ENCODE measurements at regions of chr20 and their contacts with region 1.

Region 1: GRCh38 chr20:43590392-43591323 is at the start of gene IFT52:
- DNase-seq: peak; percentile 96
- ATAC-seq: peak; percentile 99
- total RNA-seq, gene IFT52: 6.5 TPM

Region 2: GRCh38 chr20:43375591-43375990 is 215.1 kb before region 1 on chr20:
- intact Hi-C with region 1: no loop called
- DNase-seq: no peak
- ATAC-seq: no peak

Region 3: GRCh38 chr20:43456809-43457639 is 133.6 kb before region 1 on chr20:
- intact Hi-C with region 1: loop called (anchors 5 kb)
- DNase-seq: peak; percentile 94
- ATAC-seq: peak; percentile 89

Region 4: DNA sequence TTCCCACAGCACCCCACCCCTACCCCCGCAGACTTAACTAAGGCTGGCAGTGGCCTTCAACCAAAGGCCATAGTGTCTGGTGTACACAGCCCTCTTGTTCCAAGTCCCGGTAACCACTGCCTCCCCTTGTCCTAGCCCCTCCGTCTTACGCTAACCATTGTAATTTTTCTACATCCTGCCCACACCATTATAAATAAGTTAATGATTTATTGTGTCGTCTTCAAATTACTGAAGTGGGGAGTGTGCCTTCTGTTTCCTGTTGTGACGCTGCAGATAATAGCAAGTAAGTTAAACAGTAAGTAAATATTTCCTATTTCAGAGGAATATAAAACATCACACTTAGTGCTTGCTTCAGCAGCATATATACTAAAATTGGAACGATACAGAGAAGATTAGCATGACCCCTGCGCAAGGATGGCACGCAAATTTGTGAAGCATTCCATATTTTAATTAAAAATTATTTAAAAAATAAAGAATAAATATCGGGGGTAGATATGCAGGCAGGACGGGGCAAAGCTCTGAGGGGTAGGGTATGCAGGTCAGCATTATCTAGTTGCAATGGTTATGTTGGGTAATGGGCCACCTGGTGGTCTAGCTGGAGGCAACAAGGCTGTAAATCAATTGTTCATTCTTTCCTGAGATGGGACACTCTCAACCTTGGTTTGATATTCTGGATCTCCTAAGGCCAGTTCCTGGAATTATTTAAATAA is 117.8 kb before region 1 on chr20:
- intact Hi-C with region 1: no loop called
- DNase-seq: no peak
- ATAC-seq: no peak

Region 5: DNA sequence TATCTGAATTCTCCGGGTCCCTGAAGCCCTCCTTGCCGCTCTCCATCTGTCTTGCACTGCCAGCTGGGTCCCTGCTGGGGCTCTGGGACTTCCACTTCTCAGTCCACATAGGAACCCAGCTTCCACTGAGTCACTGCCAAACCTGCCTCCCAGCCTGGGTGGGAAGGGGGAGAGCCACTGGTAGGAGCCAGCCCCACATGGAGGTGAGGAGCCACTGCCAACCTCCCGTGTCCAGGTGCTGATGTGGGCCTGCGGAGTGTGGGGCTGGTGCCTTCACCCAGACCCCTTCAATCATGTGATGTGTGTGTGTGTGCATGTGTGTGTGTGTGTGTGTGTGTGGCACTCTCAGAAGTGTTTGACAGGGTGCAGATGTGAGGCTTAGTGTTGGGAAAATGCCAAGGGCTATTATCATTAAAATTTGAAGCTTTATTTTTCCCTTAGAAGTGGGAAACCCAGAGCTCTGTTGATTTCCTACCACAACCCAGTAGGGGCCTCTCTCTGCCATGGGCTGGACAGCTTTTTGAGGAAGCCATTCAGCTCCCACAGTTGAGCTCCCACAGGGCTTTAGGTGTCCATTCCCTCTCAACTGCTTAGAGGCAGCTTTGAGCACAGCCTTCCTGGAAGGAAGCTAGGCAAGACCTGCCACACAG is 41.1 kb before region 1 on chr20:
- intact Hi-C with region 1: no loop called
- DNase-seq: no peak
- ATAC-seq: no peak